ENCODE measurements at regions of chr1 and their contacts with region 1.

Region 1: GRCh38 chr1:153727463-153728304 is at the start of gene INTS3:
- DNase-seq: peak; percentile 99 to 100
- H3K4me3 ChIP-seq: peak within 1 kb of the TSS; percentile 75 to 84 (median 82)
- H3K27ac ChIP-seq: peak within 1 kb of the TSS; percentile 96 to 97
- H3K4me1 ChIP-seq: peaks cover 0 to 8% of the 10 kb centered on the region in 2 donors
- H3K27me3 ChIP-seq: no peaks in the 10 kb centered on the region
- CTCF ChIP-seq: no peak
- POLR2A ChIP-seq: peak; percentile 59
- total RNA-seq, gene INTS3: 46.5 to 53.4 (median 51.7) TPM

Region 2: DNA sequence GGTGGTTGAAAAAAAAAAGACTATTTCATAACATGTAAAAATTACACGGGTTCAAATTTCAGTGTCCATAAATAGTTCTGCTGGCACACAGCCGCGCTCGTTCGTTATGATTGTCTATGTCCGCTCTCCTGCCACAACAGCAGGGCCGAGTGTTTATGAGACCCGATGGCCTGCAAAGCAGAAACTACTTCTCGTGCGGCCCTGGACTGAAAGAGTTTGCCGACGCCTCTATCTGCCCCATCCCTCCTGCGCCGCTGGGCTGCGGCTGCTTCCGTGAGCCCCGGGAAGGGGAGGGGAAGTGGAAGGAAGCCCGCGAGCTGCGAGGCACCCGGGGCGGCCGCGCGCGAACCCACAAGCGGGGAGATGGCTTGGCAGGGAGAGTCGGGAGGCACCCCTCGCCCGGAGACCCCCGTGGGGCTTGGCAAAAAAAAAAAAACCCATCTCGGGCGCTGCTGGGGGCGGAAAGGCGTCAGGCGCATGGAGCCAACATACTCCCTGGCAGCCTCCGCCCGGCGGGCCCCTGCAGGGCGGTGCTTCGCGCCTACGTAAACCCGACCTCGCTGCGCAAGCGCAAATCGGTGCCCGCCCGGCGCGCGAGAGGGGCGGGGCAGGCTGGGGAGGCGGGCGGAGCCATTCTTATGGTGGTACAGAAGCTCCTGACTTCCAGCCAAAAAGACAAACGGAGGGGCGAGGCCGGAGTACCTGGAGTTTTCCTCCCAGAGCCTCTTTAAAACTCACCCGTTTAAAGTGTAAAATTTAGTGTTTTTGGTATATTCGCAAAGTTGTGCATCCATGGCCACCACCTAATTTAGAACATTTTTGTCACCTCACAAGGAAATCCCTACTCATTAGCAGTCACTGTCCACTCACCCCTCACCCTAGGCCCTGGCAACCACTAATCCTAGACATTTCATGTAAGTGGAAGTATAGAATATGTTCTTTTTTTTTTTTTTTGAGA is 55.8 kb after region 1 on chr1:
- intact Hi-C with region 1: loop called (anchors 2 kb)
- DNase-seq: peak; percentile 84 to 90
- H3K4me3 ChIP-seq: peak overlapping the region; percentile 56 to 79 (median 73)
- H3K27ac ChIP-seq: peak overlapping the region; percentile 95 to 96
- H3K4me1 ChIP-seq: no peaks in the 10 kb centered on the region
- H3K27me3 ChIP-seq: no peaks in the 10 kb centered on the region
- CTCF ChIP-seq: peak in 2 of 3 donors; percentile 35 to 51
- POLR2A ChIP-seq: peak; percentile 95

Region 3: DNA sequence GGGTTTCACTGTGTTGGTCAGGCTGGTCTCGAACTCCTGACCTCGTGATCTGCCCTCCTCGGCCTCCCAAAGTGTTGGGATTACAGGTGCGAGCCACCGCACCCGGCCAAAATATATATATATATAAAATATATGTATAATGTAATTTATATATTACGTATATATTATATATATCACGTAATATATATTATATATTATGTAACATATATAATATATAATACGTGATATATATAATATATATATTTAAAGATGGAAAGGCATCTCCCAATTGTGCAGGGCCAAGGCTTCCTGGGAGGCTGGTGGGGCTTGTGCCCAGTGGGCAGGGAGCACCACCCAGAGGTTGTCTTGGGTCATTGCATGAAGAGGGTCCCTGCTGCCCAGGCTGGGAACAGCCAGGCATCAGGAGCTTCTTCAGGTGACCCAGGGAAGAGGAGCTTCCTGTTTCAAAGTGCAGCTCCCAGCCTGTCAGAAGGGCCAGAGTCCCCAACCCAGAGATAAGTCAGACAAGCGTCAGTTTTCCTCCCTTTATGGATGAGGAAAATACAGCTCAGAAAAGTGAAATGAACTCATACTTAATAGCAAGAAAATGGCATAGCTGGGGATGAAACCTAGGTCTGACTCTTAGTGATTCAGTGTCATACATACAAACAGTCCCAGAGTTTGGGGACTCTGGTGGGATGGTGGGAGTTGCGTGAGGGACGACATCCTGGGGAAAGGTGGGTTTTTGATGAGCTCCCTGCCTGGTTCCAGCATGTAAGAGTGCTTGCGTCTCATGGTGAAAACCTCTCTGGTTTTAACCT is 818.8 kb after region 1 on chr1:
- intact Hi-C with region 1: loop called (anchors 5 kb)
- DNase-seq: no peak
- H3K4me3 ChIP-seq: no peak overlapping the region
- H3K27ac ChIP-seq: peak overlapping the region; percentile 20 to 30
- H3K4me1 ChIP-seq: peaks cover 0 to 6% of the 10 kb centered on the region in 2 donors
- H3K27me3 ChIP-seq: no peaks in the 10 kb centered on the region
- CTCF ChIP-seq: peak in 2 of 3 donors; percentile 38 to 49
- POLR2A ChIP-seq: no peak

Measured in breast epithelium (tissue), 4 donors.